Activated CD4-positive, alpha-beta memory T cell treated with anti-CD3 and anti-CD28 coated beads, Interleukin-2, amount 10 ng/mL, durations not matched to agents 7 days and 5 days (primary cell): ENCODE measurements at regions of chr6 and their contacts with region 1.

Region 1: GRCh38 chr6:43774776-43775534 is 4.9 kb downstream of the VEGFA start:
- DNase-seq: peak; percentile 73
- H3K4me3 Mint-ChIP-seq: no peak overlapping the region
- H3K27ac Mint-ChIP-seq: no peak overlapping the region
- H3K4me1 Mint-ChIP-seq: peaks cover 49% of the 10 kb centered on the region
- H3K27me3 Mint-ChIP-seq: no peaks in the 10 kb centered on the region

Region 2: GRCh38 chr6:43762966-43763695 is 11.8 kb before region 1 on chr6:
- CTCF ChIA-PET with region 1: interaction called, 18 read pairs
- POLR2A ChIA-PET with region 1: interaction called, 5 read pairs
- DNase-seq: no peak
- H3K4me3 Mint-ChIP-seq: no peak overlapping the region
- H3K27ac Mint-ChIP-seq: no peak overlapping the region
- H3K4me1 Mint-ChIP-seq: no peaks in the 10 kb centered on the region
- H3K27me3 Mint-ChIP-seq: peaks cover 19% of the 10 kb centered on the region

Region 3: GRCh38 chr6:43790025-43790523 is 15.1 kb after region 1 on chr6:
- CTCF ChIA-PET with region 1: interaction called, 10 read pairs
- POLR2A ChIA-PET with region 1: interaction called, 3 read pairs
- DNase-seq: no peak
- H3K4me3 Mint-ChIP-seq: no peak overlapping the region
- H3K27ac Mint-ChIP-seq: no peak overlapping the region
- H3K4me1 Mint-ChIP-seq: no peaks in the 10 kb centered on the region
- H3K27me3 Mint-ChIP-seq: peaks cover 5% of the 10 kb centered on the region

Region 4: GRCh38 chr6:43933148-43933885 is 158.4 kb after region 1 on chr6:
- CTCF ChIA-PET with region 1: no interaction called
- POLR2A ChIA-PET with region 1: no interaction called
- DNase-seq: no peak
- H3K4me3 Mint-ChIP-seq: no peak overlapping the region
- H3K27ac Mint-ChIP-seq: no peak overlapping the region
- H3K4me1 Mint-ChIP-seq: peaks cover 2% of the 10 kb centered on the region
- H3K27me3 Mint-ChIP-seq: peaks cover 2% of the 10 kb centered on the region